ENCODE measurements at regions of chr1 and their contacts with region 1.

Region 1: DNA sequence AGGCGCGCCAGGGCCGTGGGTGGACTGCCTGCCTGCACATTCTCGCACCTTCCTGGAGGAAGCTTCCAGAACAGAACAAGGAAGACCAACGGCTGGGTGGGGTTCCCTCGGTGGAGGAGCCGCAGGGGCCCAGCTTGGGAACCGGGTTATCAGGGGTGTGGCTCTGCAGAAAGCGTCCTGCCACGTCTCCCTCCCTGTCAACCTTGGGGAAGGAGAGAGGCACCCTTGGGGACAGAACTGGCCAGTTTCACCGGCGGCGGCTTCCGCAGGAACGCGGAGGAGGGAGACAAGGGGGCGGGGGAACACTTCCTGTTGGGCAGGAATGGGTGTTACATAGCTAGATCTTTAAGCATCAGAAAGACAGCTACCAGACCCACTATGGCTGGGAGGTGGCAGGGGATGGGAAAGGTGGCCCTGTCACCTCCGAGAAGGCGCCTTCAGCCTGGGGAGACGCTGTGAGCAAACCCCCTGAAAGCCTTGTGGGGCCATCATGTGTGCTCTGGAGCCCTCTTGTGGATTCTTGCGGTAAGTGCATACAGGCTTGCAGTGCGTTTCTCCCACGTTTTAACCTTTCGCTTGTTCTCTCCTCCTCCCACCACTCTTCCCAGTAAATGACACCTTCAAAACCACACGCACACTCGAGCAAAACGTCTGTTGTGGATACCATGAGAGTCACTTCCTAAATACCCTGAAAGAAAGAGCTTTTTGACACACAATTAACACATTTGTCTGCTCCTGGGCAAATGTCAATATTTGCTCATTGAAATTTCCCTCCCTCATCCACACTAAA is 3.8 kb upstream of the PLEKHA6 start:
- DNase-seq: peak; percentile 92
- H3K4me3 Mint-ChIP-seq: peak overlapping the region; percentile 66
- H3K27ac Mint-ChIP-seq: peak overlapping the region; percentile 58
- H3K4me1 Mint-ChIP-seq: peaks cover 12% of the 10 kb centered on the region
- H3K27me3 Mint-ChIP-seq: no peaks in the 10 kb centered on the region
- CTCF ChIP-seq: peak; percentile 100

Region 2: DNA sequence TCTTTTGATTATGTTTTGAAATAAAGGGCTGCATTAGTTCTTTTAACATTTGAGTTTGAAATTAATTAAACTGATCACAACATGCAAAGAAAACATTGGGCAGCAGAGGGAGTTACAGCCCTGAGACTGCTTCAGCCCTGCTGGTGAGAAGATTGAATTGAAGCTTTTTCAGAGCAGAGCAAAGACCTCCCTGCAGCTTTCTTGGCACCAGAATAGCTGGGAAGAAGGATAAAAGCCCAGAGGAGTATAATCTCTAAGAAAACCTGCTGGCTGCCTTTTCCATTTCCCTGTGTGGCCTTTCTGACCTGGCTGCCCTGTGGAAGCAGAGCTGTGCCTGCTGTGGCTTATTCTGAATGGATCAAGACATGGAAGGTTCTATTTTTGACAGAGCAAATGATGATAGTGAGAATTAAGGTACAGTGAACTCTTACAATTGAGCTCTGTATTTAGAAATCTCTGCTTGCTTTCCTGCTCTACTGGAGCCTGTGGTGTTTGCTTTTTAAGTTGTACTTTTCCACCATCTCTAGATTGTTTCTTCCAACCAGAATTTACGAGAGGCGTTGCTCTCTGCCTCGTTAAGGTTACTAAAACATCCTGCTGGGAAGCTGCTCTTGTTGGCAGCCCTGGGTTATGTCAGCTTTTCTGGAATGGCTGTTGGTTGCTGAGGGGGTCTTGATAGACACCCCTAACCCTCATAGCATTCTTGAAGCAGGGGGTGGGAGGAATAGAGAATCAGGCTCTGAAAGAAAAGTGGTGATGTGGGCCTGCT is 492.2 kb before region 1 on chr1:
- CTCF ChIA-PET with region 1: interaction called, 19 read pairs
- POLR2A ChIA-PET with region 1: no interaction called
- intact Hi-C with region 1: no loop called
- DNase-seq: peak; percentile 86
- H3K4me3 Mint-ChIP-seq: no peak overlapping the region
- H3K27ac Mint-ChIP-seq: peak overlapping the region; percentile 74
- H3K4me1 Mint-ChIP-seq: peaks cover 3% of the 10 kb centered on the region
- H3K27me3 Mint-ChIP-seq: no peaks in the 10 kb centered on the region
- CTCF ChIP-seq: peak; percentile 100

Region 3: GRCh38 chr1:204171751-204172178 is 191.8 kb before region 1 on chr1:
- CTCF ChIA-PET with region 1: interaction called, 312 read pairs
- POLR2A ChIA-PET with region 1: interaction called, 3 read pairs
- intact Hi-C with region 1: no loop called
- DNase-seq: peak; percentile 89
- H3K4me3 Mint-ChIP-seq: no peak overlapping the region
- H3K27ac Mint-ChIP-seq: no peak overlapping the region
- H3K4me1 Mint-ChIP-seq: peaks cover 7% of the 10 kb centered on the region
- H3K27me3 Mint-ChIP-seq: no peaks in the 10 kb centered on the region
- CTCF ChIP-seq: no peak

Region 4: DNA sequence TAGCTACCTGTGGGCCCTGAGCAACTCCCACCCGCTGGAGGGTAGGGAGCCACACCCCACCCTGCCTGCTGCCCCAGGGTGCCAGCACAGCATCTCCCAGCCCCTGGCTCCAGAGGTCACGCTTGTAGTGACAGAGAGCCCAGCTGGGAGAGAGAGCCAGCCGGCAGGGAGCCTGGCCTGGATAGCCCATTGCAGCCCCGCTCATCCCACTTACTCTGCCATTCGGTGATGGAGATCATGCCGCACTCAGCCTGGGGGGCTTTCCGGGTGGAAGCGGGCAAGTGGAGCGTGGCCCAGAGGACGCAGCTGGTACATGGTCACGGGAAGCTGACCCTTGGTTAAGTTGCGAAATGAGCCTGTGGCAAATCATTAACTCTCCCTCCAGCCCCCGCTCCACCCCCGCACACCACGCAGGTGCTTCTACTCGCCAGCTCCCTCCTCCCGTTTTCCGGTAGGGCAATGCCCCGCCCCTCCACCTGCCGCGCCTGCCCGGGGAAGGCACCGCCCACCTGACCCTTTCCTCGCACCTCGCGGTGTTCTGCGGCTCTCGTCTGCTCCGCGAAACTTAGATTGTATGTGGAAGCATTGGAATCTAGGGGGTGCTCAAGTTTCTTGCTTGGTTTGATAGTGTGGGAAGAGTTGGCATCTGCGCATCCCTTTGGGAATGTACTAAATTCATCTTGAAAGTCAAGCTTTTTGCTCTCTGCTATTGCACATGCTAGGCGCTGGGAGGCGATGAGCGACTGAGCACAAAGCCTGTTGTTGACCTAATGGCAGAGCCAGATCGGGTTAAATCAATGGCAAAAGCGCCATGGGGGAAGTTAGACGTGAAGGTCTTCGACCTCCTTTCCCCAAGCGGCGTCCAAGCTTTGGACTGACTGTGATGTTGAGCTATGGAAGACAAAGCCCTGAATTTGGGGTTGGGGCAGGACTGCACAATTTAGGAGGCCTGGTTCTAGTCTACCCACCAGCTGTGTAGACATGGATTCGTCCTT is 149.6 kb before region 1 on chr1 and contains the start of gene GOLT1A:
- CTCF ChIA-PET with region 1: interaction called, 110 read pairs
- POLR2A ChIA-PET with region 1: interaction called, 5 read pairs
- intact Hi-C with region 1: loop called (anchors 1 kb)
- DNase-seq: peak; percentile 93
- H3K4me3 Mint-ChIP-seq: peak within 1 kb of the TSS; percentile 68
- H3K27ac Mint-ChIP-seq: peak within 1 kb of the TSS; percentile 8
- H3K4me1 Mint-ChIP-seq: peaks cover 6% of the 10 kb centered on the region
- H3K27me3 Mint-ChIP-seq: no peaks in the 10 kb centered on the region
- CTCF ChIP-seq: peak; percentile 93
- total RNA-seq, gene GOLT1A: 11.5 and 12.7 TPM in 2 replicates

Region 5: GRCh38 chr1:204257954-204258752 is 105.4 kb before region 1 on chr1:
- CTCF ChIA-PET with region 1: interaction called, 289 read pairs
- POLR2A ChIA-PET with region 1: interaction called, 16 read pairs
- intact Hi-C with region 1: loop called (anchors 1 kb)
- DNase-seq: peak; percentile 80
- H3K4me3 Mint-ChIP-seq: no peak overlapping the region
- H3K27ac Mint-ChIP-seq: peak overlapping the region; percentile 49
- H3K4me1 Mint-ChIP-seq: peaks cover 13% of the 10 kb centered on the region
- H3K27me3 Mint-ChIP-seq: no peaks in the 10 kb centered on the region
- CTCF ChIP-seq: peak; percentile 97

Region 6: DNA sequence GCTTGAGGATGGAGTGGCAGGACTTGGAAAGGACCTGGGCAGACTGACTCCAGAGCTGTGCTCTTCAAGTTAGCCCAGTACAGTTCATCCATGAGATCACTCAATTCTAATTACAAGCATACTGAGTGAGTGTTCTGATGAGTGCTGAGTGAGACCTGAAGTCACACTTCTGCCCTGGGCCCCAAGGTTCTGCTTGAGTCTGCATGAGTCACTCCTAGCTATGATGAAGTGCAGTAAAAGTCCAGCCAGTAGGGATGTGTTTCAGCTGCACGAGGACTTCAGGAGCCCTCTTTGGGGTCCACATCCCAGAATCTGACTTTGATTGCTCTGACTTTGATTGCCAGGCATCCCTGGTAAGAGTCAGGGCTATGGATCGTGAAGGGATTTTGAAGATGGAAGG is 39.6 kb before region 1 on chr1:
- CTCF ChIA-PET with region 1: interaction called, 106 read pairs
- POLR2A ChIA-PET with region 1: interaction called, 4 read pairs
- intact Hi-C with region 1: no loop called
- DNase-seq: peak; percentile 81
- H3K4me3 Mint-ChIP-seq: no peak overlapping the region
- H3K27ac Mint-ChIP-seq: peak overlapping the region; percentile 2
- H3K4me1 Mint-ChIP-seq: peaks cover 54% of the 10 kb centered on the region
- H3K27me3 Mint-ChIP-seq: no peaks in the 10 kb centered on the region
- CTCF ChIP-seq: no peak

Region 7: GRCh38 chr1:204398217-204399081 is 34.9 kb after region 1 on chr1:
- CTCF ChIA-PET with region 1: interaction called, 83 read pairs
- POLR2A ChIA-PET with region 1: interaction called, 11 read pairs
- intact Hi-C with region 1: no loop called
- DNase-seq: peak; percentile 97
- H3K4me3 Mint-ChIP-seq: no peak overlapping the region
- H3K27ac Mint-ChIP-seq: peak overlapping the region; percentile 84
- H3K4me1 Mint-ChIP-seq: no peaks in the 10 kb centered on the region
- H3K27me3 Mint-ChIP-seq: no peaks in the 10 kb centered on the region
- CTCF ChIP-seq: peak; percentile 98

Region 8: GRCh38 chr1:204619721-204620120 is 256.2 kb after region 1 on chr1:
- CTCF ChIA-PET with region 1: no interaction called
- POLR2A ChIA-PET with region 1: no interaction called
- intact Hi-C with region 1: no loop called
- DNase-seq: no peak
- H3K4me3 Mint-ChIP-seq: no peak overlapping the region
- H3K27ac Mint-ChIP-seq: no peak overlapping the region
- H3K4me1 Mint-ChIP-seq: no peaks in the 10 kb centered on the region
- H3K27me3 Mint-ChIP-seq: peaks cover 25% of the 10 kb centered on the region
- CTCF ChIP-seq: no peak

Measured in MCF 10A (cell line).